ENCODE measurements at regions of chr10 and their contacts with region 1.

Region 1: DNA sequence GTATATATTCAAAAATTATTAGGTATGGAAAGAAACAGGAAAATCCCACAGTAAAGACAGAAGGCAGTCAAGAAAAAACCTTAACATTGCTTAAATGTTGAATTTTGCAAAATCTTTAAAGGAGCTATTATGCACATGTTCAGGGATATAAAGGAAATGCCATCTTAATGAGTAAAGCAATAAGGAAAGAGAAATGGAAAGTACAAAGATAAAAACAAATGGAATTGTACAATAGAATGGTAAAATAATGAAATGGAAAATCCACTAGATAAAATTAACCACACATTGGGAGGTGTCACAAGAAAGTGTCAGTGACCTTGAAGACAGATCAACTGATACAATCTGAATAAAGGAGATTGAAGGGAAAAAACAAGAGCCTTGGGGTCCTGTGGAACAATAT is 82.0 kb downstream of the KIF20B start:
- DNase-seq: no peak
- H3K4me3 ChIP-seq: no peak overlapping the region
- H3K27ac ChIP-seq: no peak overlapping the region
- H3K27me3 ChIP-seq: no peaks in the 10 kb centered on the region
- CTCF ChIP-seq: no peak

Region 2: DNA sequence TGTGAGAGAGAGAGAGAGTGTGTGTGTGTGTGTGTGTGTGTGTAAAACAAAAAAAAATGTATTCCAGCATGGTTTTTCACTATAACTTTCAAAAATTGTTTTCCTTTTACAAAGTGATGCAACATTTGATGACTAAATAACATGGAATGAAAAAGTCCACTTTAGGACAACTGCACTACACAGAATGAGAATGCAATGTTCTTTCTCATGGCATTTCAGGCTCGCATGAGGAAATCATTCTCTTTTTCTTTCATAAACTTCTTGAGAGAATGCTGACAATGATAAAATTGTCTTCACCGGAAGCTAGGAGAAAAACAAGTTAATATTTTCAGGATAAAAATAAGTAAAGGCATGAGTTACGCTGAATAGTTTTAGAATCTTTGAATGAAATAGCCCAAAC is 301.7 kb before region 1 on chr10:
- CTCF ChIA-PET with region 1: no interaction called
- POLR2A ChIA-PET with region 1: no interaction called
- DNase-seq: peak; percentile 65
- H3K4me3 ChIP-seq: no peak overlapping the region
- H3K27ac ChIP-seq: no peak overlapping the region
- H3K27me3 ChIP-seq: no peaks in the 10 kb centered on the region
- CTCF ChIP-seq: no peak

Region 3: DNA sequence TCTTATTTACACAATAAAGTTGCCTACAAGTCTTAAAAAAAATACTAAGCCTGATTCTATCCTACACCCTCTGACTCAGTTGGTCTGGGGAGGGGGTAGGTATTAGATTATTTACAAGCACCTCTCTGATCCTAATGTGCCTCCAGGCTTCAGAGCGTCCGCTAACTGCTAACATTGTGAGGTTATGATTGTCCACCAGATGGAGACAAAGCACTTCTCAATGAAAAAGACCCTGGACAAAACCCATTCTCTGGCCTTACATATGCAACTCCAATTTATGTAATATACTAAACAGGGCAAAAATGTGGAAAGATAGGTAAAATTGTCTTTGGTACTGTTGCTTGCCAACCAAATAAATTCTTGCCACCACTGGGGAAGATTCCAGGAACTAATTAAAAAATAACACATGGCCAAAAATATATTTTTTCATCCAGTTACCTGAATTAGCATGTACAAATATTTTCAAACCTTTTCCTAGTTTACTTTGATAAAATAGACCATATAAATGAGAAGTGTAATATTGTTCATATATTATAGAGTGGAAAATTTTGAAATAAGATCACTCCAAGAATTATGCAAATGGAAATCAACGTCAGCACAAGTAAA is 10.3 kb after region 1 on chr10:
- CTCF ChIA-PET with region 1: interaction called, 10 read pairs
- POLR2A ChIA-PET with region 1: no interaction called
- DNase-seq: peak; percentile 55
- H3K4me3 ChIP-seq: no peak overlapping the region
- H3K27ac ChIP-seq: no peak overlapping the region
- H3K27me3 ChIP-seq: no peaks in the 10 kb centered on the region
- CTCF ChIP-seq: peak; percentile 86

Measured in AG04450 (cell line).